HAP-1 (cell line): ENCODE measurements at regions of chr13 and their contacts with region 1.

Region 1: DNA sequence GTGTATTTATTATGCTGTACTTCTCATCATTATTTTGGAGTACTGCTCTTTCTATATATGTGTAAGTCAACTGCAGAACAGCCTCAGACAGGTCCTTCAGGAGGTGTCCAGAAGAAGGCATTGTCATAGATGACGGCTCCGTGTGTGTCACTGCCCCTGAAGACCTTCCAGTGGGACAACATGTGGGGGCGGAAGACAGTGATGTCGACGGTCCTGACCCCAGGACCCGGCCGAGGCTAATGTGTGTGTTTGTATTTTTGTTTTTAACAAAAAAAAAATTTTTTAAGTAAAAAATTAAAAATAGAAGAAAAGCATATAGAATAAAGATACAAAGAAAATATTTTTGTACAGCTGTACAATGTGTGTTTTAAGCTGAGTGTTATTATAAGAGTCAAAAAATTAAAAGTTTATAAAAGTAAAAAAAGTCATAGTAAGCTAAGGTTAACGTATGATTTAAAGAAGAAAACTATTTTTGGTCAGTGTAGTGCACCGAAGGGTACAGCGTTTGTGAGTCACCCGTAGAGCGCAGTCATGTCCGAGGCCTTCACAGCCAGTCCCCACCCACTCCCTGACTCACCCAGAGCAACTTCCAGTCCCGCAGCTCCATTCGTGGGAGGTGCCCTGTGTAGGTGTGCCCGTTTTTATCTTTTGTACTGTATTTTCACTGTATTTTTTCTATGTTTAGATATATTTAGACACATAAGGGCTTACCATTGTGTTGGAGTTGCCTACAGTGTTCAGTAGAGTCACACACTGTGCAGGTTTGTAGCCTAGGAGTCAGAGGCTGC is 42.2 kb upstream of the SPACA7 start:
- DNase-seq: no peak
- H3K4me3 ChIP-seq: no peak overlapping the region
- H3K4me1 ChIP-seq: no peaks in the 10 kb centered on the region
- H3K27me3 ChIP-seq: no peaks in the 10 kb centered on the region

Region 2: GRCh38 chr13:112270951-112271350 is 63.0 kb before region 1 on chr13:
- in situ Hi-C with region 1: loop called (anchors 10 kb)
- DNase-seq: no peak
- H3K4me3 ChIP-seq: no peak overlapping the region
- H3K4me1 ChIP-seq: no peaks in the 10 kb centered on the region
- H3K27me3 ChIP-seq: no peaks in the 10 kb centered on the region

Region 3: GRCh38 chr13:112968908-112969691 is 635.1 kb after region 1 on chr13 and contains the start of gene MCF2L:
- in situ Hi-C with region 1: no loop called
- DNase-seq: peak; percentile 44 to 66
- H3K4me3 ChIP-seq: peak within 1 kb of the TSS; percentile 52
- H3K4me1 ChIP-seq: peaks cover 9% of the 10 kb centered on the region
- H3K27me3 ChIP-seq: peaks cover 5% of the 10 kb centered on the region; the same call in 1 of the 2 replicates